ENCODE measurements at regions of chr12 and their contacts with region 1.

Region 1: DNA sequence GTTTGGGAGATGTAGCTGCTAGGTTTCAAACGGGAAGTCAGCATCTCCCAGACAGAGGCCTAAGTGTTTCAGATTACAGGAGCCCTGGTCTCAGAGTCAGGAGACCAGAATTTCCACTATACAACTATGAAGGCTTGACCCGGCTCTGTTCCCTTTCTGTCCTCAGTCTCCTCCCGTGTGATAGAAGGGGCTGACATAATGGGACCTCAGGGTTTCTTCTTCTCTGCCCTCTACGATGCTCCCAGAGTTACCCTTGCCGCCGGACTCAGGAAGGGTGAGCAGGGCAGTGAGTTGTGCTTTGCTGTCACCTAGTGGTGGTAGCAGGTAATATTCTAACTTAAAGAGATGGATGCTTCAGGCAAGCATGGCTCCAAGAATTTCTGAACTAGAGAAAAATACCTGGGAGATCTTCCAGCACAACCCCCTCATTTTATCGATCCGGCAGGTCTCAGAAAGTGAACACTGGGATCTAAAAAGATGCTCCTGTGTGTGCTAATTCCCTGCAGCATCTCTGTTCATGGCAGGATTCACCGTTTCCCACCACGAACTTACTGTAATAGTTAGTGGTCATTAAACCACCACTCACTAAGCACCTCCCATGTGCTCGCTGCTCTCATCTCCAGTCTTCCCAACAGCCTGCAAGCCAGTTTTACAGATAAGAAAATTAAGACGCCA is 84.4 kb downstream of the VWF start:
- DNase-seq: peak; percentile 72
- ATAC-seq: peak; percentile 85
- H3K4me3 Mint-ChIP-seq: no peak overlapping the region
- H3K27ac Mint-ChIP-seq: no peak overlapping the region
- H3K4me1 Mint-ChIP-seq: peaks cover 2% of the 10 kb centered on the region
- H3K27me3 Mint-ChIP-seq: no peaks in the 10 kb centered on the region

Region 2: DNA sequence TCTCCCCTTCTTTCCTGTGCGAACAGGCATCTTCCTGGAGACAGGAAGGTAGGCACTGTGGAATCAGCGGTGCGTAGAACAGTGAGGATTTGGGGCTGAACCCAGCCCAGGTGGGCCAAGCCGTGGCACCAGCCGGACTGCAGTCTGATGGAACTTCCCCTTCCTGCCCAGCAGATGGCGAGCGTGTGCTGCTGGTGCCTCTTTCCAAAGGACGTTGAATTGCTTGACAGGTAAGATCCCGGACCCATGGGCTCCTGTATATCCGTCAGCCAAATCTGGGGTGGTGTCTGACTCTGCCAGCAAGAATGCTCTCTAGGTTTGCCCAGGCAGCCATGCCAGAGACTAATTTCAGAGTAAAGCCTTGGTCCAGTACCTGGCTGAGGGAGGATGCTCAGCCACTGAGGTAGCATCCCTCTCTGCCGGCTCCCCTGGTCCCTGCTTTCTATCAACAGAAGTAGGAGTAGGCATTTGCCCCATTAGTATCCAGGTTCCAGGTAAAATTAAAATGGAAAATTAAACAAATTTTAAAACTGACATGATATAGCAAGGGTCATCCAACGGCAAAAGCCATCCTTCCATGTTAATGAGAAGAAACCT is 1017.5 kb before region 1 on chr12:
- CTCF ChIA-PET with region 1: no interaction called
- POLR2A ChIA-PET with region 1: no interaction called
- intact Hi-C with region 1: loop called in 1 of 2 experiments (anchors 2 kb)
- DNase-seq: peak; percentile 67
- ATAC-seq: peak; percentile 63
- H3K4me3 Mint-ChIP-seq: no peak overlapping the region
- H3K27ac Mint-ChIP-seq: no peak overlapping the region
- H3K4me1 Mint-ChIP-seq: no peaks in the 10 kb centered on the region
- H3K27me3 Mint-ChIP-seq: peaks cover 16% of the 10 kb centered on the region

Region 3: GRCh38 chr12:5982106-5982505 is 57.9 kb before region 1 on chr12:
- CTCF ChIA-PET with region 1: interaction called, 11 read pairs
- POLR2A ChIA-PET with region 1: no interaction called
- intact Hi-C with region 1: no loop called
- DNase-seq: no peak
- ATAC-seq: no peak
- H3K4me3 Mint-ChIP-seq: no peak overlapping the region
- H3K27ac Mint-ChIP-seq: no peak overlapping the region
- H3K4me1 Mint-ChIP-seq: no peaks in the 10 kb centered on the region
- H3K27me3 Mint-ChIP-seq: peaks cover 5% of the 10 kb centered on the region

Region 4: GRCh38 chr12:5996459-5996858 is 43.6 kb before region 1 on chr12:
- CTCF ChIA-PET with region 1: interaction called, 215 read pairs
- POLR2A ChIA-PET with region 1: interaction called, 4 read pairs
- intact Hi-C with region 1: no loop called
- DNase-seq: no peak
- ATAC-seq: no peak
- H3K4me3 Mint-ChIP-seq: no peak overlapping the region
- H3K27ac Mint-ChIP-seq: no peak overlapping the region
- H3K4me1 Mint-ChIP-seq: no peaks in the 10 kb centered on the region
- H3K27me3 Mint-ChIP-seq: peaks cover 24% of the 10 kb centered on the region

Region 5: GRCh38 chr12:6285063-6285477 is 245.0 kb after region 1 on chr12:
- CTCF ChIA-PET with region 1: interaction called, 5 read pairs
- POLR2A ChIA-PET with region 1: no interaction called
- intact Hi-C with region 1: loop called in 1 of 2 experiments (anchors 1 kb)
- DNase-seq: peak; percentile 77
- ATAC-seq: peak; percentile 92
- H3K4me3 Mint-ChIP-seq: no peak overlapping the region
- H3K27ac Mint-ChIP-seq: no peak overlapping the region
- H3K4me1 Mint-ChIP-seq: peaks cover 2% of the 10 kb centered on the region
- H3K27me3 Mint-ChIP-seq: peaks cover 7% of the 10 kb centered on the region

Measured in activated CD4-positive, alpha-beta T cell treated with anti-CD3 and anti-CD28 coated beads for 36 hours (primary cell).